ENCODE measurements at regions of chr6 and their contacts with region 1.

Region 1: DNA sequence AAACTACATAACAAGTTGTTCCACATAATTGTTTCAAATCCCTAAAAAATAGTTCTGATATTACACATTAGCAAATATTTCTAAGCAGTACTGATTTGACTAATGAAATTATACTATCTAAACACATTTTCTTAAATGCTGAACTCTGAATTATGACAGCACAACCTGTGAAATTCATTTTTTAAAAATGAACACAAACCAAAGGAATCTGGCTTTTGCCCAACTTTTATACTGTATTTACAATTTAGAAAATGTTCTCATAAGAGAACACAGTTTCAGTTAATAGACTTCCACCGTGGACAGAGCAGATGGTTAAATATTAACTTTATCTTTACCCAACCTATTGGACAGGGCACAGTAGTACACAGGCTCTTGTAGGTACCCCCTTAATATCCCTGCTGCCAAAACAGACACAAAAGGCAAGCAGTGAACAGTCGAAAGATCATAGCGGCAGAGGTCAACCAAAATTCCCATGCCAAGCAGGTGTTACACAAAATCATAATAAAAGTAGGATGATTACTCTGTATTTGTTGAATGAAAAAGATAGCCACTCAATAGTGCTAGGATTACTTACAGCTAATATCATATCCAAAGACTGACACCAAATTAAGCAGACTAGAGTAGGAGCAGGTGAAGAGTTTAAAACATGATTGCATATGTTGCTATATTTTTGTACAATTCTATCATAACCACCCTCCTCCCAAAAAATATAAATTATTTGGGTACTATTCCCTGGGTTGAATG is 122.5 kb downstream of the RNGTT start:
- DNase-seq: no peak
- H3K4me3 ChIP-seq: no peak overlapping the region
- H3K27ac ChIP-seq: no peak overlapping the region
- H3K4me1 ChIP-seq: no peaks in the 10 kb centered on the region
- CTCF ChIP-seq: no peak

Region 2: GRCh38 chr6:88856566-88856965 is 15.6 kb after region 1 on chr6:
- CTCF ChIA-PET with region 1: no interaction called
- POLR2A ChIA-PET with region 1: interaction called, 13 read pairs
- intact Hi-C with region 1: no loop called
- DNase-seq: no peak
- H3K4me3 ChIP-seq: no peak overlapping the region
- H3K27ac ChIP-seq: no peak overlapping the region
- H3K4me1 ChIP-seq: no peaks in the 10 kb centered on the region
- CTCF ChIP-seq: no peak

Region 3: DNA sequence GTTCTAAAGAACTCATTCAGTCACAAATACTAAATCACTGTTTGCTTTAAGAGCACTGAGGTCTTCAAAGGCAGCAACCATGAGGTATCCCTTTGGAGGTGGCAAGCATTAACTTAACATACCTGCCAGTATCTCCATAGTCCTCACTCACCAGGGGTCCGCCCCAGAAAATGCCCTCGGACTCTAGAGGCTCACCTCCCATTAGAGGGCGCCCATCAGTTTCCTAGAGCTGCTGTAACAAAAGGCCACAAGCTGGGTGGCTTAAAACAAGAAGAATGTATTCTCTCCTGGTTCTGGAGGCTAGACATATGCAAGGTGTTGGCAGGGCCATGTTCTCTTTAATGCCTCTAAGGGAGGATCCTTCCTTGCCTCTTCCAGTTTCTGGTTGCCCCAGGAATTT is 134.4 kb after region 1 on chr6:
- CTCF ChIA-PET with region 1: no interaction called
- POLR2A ChIA-PET with region 1: no interaction called
- intact Hi-C with region 1: no loop called
- DNase-seq: peak; percentile 13
- H3K4me3 ChIP-seq: no peak overlapping the region
- H3K27ac ChIP-seq: no peak overlapping the region
- H3K4me1 ChIP-seq: no peaks in the 10 kb centered on the region
- CTCF ChIP-seq: peak; percentile 66